Thyroid gland (tissue), 4 donors: ENCODE measurements at regions of chr10 and their contacts with region 1.

Region 1: DNA sequence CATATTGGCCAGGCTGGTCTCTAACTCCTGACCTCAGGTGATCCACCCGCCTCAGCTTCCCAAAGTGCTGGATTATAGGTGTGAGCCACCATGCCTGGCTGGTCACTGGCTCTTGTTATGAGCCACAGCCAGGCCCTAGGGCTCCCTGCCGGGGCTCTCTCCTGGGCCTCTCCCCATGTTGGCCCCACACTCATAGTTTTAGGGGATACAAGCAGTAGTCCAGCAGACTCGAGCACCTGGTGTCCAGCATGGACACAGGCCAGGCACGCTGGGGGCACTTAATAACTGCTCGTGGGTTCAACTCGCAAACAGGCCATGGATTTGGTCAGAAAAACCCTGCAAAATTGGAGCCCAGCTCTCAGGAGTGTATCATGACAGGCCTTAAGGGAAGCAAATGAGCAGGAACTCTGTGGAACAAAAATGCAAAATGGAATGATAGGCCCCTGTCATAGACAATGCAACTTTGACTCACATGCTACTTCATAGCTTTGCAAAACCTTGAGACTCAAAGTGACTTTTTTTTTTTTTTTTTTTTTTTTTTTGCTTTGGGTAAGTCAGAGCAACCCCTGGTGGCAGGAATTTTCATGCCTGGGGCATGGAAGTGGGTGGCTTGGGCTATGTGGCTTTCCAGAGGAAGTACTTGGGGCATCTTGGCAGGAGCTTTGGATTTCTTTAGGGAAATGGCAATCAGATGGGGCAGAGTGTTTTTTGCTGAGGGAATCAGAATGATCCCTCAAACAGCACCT is 62.5 kb downstream of the TACC2 start:
- DNase-seq: peak; percentile 81 to 84
- H3K4me3 ChIP-seq: no peak overlapping the region
- H3K27ac ChIP-seq: peak overlapping the region; percentile 59 to 94 (median 75)
- H3K4me1 ChIP-seq: peaks cover 9 to 25% of the 10 kb centered on the region in 2 donors
- H3K27me3 ChIP-seq: no peaks in the 10 kb centered on the region
- CTCF ChIP-seq: peak; percentile 52 to 92 (median 61)
- POLR2A ChIP-seq: no peak

Region 2: GRCh38 chr10:121927841-121928527 is 123.4 kb before region 1 on chr10 and contains the start of gene ATE1:
- intact Hi-C with region 1: loop called (anchors 5 kb)
- DNase-seq: peak; percentile 90 to 91
- H3K4me3 ChIP-seq: peak within 1 kb of the TSS; percentile 82 to 100 (median 98)
- H3K27ac ChIP-seq: peak within 1 kb of the TSS; percentile 99 to 100 (median 99)
- H3K4me1 ChIP-seq: peaks cover 26 to 28% of the 10 kb centered on the region in 2 donors
- H3K27me3 ChIP-seq: no peaks in the 10 kb centered on the region
- CTCF ChIP-seq: peak in 2 of 6 experiments; percentile 13 to 15
- POLR2A ChIP-seq: peak; percentile 30 to 92
- total RNA-seq, gene ATE1: 47.3 to 66.0 (median 58.0) TPM

Region 3: GRCh38 chr10:122112625-122113160 is 61.3 kb after region 1 on chr10:
- intact Hi-C with region 1: loop called (anchors 10 kb)
- DNase-seq: peak; percentile 88 to 90
- H3K4me3 ChIP-seq: peak overlapping the region; percentile 8 to 90 (median 65)
- H3K27ac ChIP-seq: peak overlapping the region; percentile 100
- H3K4me1 ChIP-seq: peaks cover 44 to 45% of the 10 kb centered on the region in 2 donors
- H3K27me3 ChIP-seq: no peaks in the 10 kb centered on the region
- CTCF ChIP-seq: peak in 4 of 6 experiments; percentile 11 to 76 (median 56)
- POLR2A ChIP-seq: peak; percentile 85 to 97

Region 4: GRCh38 chr10:122154545-122155366 is 103.3 kb after region 1 on chr10:
- intact Hi-C with region 1: no loop called
- DNase-seq: no peak
- H3K4me3 ChIP-seq: no peak overlapping the region
- H3K27ac ChIP-seq: peak overlapping the region in 1 of 3 donors; percentile 23
- H3K4me1 ChIP-seq: peaks cover 7 to 13% of the 10 kb centered on the region in 2 donors
- H3K27me3 ChIP-seq: no peaks in the 10 kb centered on the region
- CTCF ChIP-seq: no peak
- POLR2A ChIP-seq: no peak